CD8-positive, alpha-beta T cell (primary cell): ENCODE measurements at regions of chr2 and their contacts with region 1.

Region 1: GRCh38 chr2:24382363-24383073 is 22.2 kb upstream of the ITSN2 start:
- DNase-seq: peak; percentile 23 to 82 (median 52)
- ATAC-seq: peak; percentile 73
- H3K4me3 ChIP-seq: no peak overlapping the region
- H3K4me3 Mint-ChIP-seq: no peak overlapping the region
- H3K27ac ChIP-seq: no peak overlapping the region
- H3K27ac Mint-ChIP-seq: no peak overlapping the region
- H3K4me1 ChIP-seq: no peaks in the 10 kb centered on the region
- H3K4me1 Mint-ChIP-seq: no peaks in the 10 kb centered on the region
- H3K27me3 ChIP-seq: no peaks in the 10 kb centered on the region
- H3K27me3 Mint-ChIP-seq: no peaks in the 10 kb centered on the region
- CTCF ChIP-seq: peak; percentile 57

Region 2: GRCh38 chr2:24228470-24228869 is 154.0 kb before region 1 on chr2:
- CTCF ChIA-PET with region 1: no interaction called
- POLR2A ChIA-PET with region 1: no interaction called
- intact Hi-C with region 1: loop called in 1 of 2 experiments (anchors 5 kb)
- DNase-seq: peak in 1 of 9 experiments; percentile 14
- ATAC-seq: no peak
- H3K4me3 ChIP-seq: no peak overlapping the region
- H3K4me3 Mint-ChIP-seq: no peak overlapping the region
- H3K27ac ChIP-seq: no peak overlapping the region
- H3K27ac Mint-ChIP-seq: no peak overlapping the region
- H3K4me1 ChIP-seq: no peaks in the 10 kb centered on the region
- H3K4me1 Mint-ChIP-seq: no peaks in the 10 kb centered on the region
- H3K27me3 ChIP-seq: no peaks in the 10 kb centered on the region
- H3K27me3 Mint-ChIP-seq: no peaks in the 10 kb centered on the region
- CTCF ChIP-seq: peak; percentile 15

Region 3: GRCh38 chr2:24287171-24287570 is 95.3 kb before region 1 on chr2:
- CTCF ChIA-PET with region 1: no interaction called
- POLR2A ChIA-PET with region 1: no interaction called
- intact Hi-C with region 1: loop called (anchors 5 to 10 kb)
- DNase-seq: no peak
- ATAC-seq: no peak
- H3K4me3 ChIP-seq: no peak overlapping the region
- H3K4me3 Mint-ChIP-seq: no peak overlapping the region
- H3K27ac ChIP-seq: no peak overlapping the region
- H3K27ac Mint-ChIP-seq: peak overlapping the region; percentile 52
- H3K4me1 ChIP-seq: no peaks in the 10 kb centered on the region
- H3K4me1 Mint-ChIP-seq: no peaks in the 10 kb centered on the region
- H3K27me3 ChIP-seq: no peaks in the 10 kb centered on the region
- H3K27me3 Mint-ChIP-seq: no peaks in the 10 kb centered on the region
- CTCF ChIP-seq: no peak

Region 4: GRCh38 chr2:24297663-24298062 is 84.9 kb before region 1 on chr2:
- CTCF ChIA-PET with region 1: no interaction called
- POLR2A ChIA-PET with region 1: no interaction called
- intact Hi-C with region 1: loop called (anchors 5 to 10 kb)
- DNase-seq: no peak
- ATAC-seq: no peak
- H3K4me3 ChIP-seq: no peak overlapping the region
- H3K4me3 Mint-ChIP-seq: no peak overlapping the region
- H3K27ac ChIP-seq: no peak overlapping the region
- H3K27ac Mint-ChIP-seq: no peak overlapping the region
- H3K4me1 ChIP-seq: no peaks in the 10 kb centered on the region
- H3K4me1 Mint-ChIP-seq: no peaks in the 10 kb centered on the region
- H3K27me3 ChIP-seq: no peaks in the 10 kb centered on the region
- H3K27me3 Mint-ChIP-seq: no peaks in the 10 kb centered on the region
- CTCF ChIP-seq: no peak

Region 5: GRCh38 chr2:24304631-24305030 is 77.9 kb before region 1 on chr2:
- CTCF ChIA-PET with region 1: no interaction called
- POLR2A ChIA-PET with region 1: no interaction called
- intact Hi-C with region 1: loop called (anchors 5 to 10 kb)
- DNase-seq: no peak
- ATAC-seq: no peak
- H3K4me3 ChIP-seq: no peak overlapping the region
- H3K4me3 Mint-ChIP-seq: no peak overlapping the region
- H3K27ac ChIP-seq: no peak overlapping the region
- H3K27ac Mint-ChIP-seq: no peak overlapping the region
- H3K4me1 ChIP-seq: no peaks in the 10 kb centered on the region
- H3K4me1 Mint-ChIP-seq: no peaks in the 10 kb centered on the region
- H3K27me3 ChIP-seq: no peaks in the 10 kb centered on the region
- H3K27me3 Mint-ChIP-seq: no peaks in the 10 kb centered on the region
- CTCF ChIP-seq: no peak